ENCODE measurements at regions of chr4 and their contacts with region 1.

Region 1: DNA sequence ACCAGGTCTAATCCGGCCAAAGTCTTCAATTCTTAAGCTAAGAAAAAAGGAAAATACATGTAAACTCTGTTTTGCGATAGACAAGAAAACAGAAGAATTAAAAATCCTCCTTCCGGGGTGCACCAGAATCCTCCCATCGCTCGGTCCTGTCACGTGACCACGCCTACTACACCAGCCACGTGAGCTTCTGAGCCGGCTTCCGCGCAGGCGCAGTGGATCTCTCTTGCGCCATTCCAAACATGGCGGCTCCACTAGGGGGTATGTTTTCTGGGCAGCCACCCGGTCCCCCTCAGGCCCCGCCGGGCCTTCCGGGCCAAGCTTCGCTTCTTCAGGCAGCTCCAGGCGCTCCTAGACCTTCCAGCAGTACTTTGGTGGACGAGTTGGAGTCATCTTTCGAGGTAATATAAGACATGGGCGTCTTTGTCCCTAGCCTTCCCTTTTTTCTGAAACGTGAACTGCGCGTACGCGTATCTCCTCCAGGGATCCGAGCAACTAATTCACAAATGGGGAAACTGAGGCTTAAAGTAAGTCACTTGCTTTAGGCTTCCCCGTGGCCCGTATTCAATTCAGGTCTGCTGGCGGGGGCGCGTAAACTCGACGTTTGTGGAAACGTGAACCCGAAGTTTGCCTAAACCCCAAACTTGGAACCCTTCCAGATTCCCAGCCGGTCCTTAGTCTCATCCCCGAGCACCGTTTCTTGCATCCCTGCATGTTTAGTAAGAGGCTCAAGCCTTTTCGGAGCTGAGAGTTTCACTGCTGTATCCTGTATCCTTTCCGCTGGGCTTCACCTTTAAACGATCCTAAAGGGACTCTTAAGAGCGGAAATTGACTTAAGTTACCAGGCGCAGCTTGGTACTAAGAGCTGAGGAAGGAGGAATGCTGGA is at the start of gene MED28:
- DNase-seq: peak; percentile 86 to 99 (median 94)

Region 2: GRCh38 chr4:17576932-17577665 is 37.6 kb before region 1 on chr4 and contains the start of gene LAP3:
- intact Hi-C with region 1: loop called (anchors 1 kb)
- DNase-seq: peak; percentile 97 to 100 (median 99)

Measured in posterior cingulate gyrus (tissue), 11 donors.